GM12878 (cell line): ENCODE measurements at regions of chr2 and their contacts with region 1.

Region 1: DNA sequence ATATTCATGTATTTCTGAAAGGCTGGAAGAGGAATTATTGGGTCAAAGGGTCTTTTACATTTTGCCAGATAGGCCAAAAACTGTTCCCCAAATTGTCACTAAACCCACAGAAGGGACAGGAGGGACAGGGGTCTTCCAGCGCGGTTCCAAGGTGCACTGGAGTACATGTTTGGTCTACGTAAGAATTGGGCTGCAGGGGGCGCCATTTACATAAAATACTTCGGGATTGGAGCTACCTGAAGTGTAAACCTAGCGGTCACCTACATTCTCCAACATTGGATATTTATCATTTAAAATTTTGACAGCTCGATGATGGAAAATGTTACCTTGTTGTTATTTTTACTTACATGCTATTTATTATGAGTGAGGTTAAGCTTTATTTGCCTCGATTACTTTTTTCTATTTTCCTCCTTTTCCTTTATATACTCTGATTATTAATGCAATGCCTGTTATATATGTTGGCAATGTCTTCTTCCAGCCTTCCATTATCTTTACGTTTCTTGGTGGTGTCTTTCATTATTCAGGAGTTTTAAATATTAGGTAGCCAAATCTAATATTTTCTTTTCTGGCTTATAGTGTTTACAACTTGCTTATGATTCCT is 43.0 kb upstream of the RAB6C start:
- DNase-seq: no peak
- ATAC-seq: peak; percentile 72
- H3K4me3 ChIP-seq: no peak overlapping the region
- H3K27ac ChIP-seq: no peak overlapping the region
- H3K4me1 ChIP-seq: no peaks in the 10 kb centered on the region
- H3K27me3 ChIP-seq: no peaks in the 10 kb centered on the region; a peak in 1 of 4 replicates
- CTCF ChIP-seq: peak; percentile 36 to 48 (median 42); a peak in 5 of 6 replicates
- EP300 ChIP-seq: no peak
- POLR2A ChIP-seq: no peak
- RAD21 ChIP-seq: peak; percentile 57

Region 2: DNA sequence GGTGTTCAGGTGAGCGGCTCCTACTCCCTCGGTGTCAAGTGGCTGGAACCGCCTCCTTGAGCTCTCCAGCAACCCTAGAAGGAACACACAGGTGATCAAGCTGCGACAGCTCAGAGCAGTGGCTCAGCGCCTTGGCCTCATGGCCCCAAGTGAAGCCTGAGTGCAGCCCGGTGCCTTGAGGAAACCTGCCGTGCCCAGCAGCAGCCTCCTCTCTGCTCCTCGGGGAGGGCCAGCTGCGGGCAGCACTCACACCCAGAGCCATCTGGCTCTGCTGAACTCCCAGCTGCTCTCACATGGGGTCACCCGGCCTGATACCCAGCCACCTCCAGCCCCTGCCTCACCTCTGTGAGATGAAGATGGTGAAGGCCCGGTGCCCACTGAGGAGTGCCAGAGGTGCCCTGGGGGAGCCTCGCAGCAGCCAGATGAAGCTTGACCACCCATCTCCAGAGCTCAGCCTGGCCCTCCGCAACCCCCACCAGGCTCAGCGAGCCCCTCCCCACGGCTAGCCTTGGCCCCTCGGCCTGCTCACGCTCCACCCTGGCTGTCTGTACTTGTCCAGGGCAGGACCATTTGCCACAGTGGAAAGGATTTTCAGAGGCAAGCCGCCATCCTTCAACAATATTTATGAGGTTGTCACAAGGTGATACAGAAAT is 27.6 kb before region 1 on chr2:
- CTCF ChIA-PET with region 1: no interaction called
- POLR2A ChIA-PET with region 1: no interaction called
- RAD21 ChIA-PET with region 1: no interaction called
- SMC1A ChIA-PET with region 1: no interaction called
- in situ Hi-C with region 1: no loop called
- intact Hi-C with region 1: no loop called
- DNase-seq: no peak
- ATAC-seq: no peak
- H3K4me3 ChIP-seq: no peak overlapping the region
- H3K27ac ChIP-seq: no peak overlapping the region
- H3K4me1 ChIP-seq: no peaks in the 10 kb centered on the region
- H3K27me3 ChIP-seq: no peaks in the 10 kb centered on the region; a peak in 1 of 4 replicates
- CTCF ChIP-seq: no peak
- EP300 ChIP-seq: no peak
- POLR2A ChIP-seq: no peak
- RAD21 ChIP-seq: no peak

Region 3: GRCh38 chr2:130303169-130303568 is 366.7 kb after region 1 on chr2:
- CTCF ChIA-PET with region 1: no interaction called
- POLR2A ChIA-PET with region 1: no interaction called
- RAD21 ChIA-PET with region 1: no interaction called
- SMC1A ChIA-PET with region 1: no interaction called
- in situ Hi-C with region 1: no loop called
- intact Hi-C with region 1: no loop called
- DNase-seq: peak; percentile 38
- ATAC-seq: peak; percentile 52
- H3K4me3 ChIP-seq: peak overlapping the region; percentile 50
- H3K27ac ChIP-seq: no peak overlapping the region
- H3K4me1 ChIP-seq: peaks cover 23% of the 10 kb centered on the region
- H3K27me3 ChIP-seq: no peaks in the 10 kb centered on the region
- CTCF ChIP-seq: no peak
- EP300 ChIP-seq: no peak
- POLR2A ChIP-seq: no peak
- RAD21 ChIP-seq: no peak

Region 4: DNA sequence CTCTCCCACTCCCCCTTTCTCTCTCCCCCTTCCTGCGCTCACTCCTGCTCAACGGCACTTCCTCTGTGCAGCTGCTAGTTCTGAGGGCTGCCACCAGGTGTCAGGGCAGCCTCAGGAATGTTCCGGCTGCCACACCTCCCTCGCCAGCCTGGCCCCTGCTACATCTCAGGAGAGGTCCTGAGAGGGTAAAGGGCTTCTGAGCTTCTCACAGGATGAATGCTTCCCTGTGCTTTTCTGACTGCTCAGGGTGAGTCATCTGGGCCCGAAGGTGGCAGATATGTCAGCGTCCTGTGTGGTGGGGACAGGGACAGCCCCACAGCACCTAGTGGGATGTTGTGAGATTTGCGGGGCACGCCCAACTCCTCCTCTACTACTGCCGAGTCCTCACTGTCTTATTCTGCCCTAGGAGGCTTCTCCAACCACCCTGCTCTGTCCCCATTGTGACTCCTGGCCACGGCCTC is 1217.7 kb after region 1 on chr2:
- CTCF ChIA-PET with region 1: interaction called, 8 read pairs
- POLR2A ChIA-PET with region 1: interaction called, 3 read pairs
- RAD21 ChIA-PET with region 1: interaction called, 3 read pairs
- SMC1A ChIA-PET with region 1: no interaction called
- in situ Hi-C with region 1: loop called (anchors 10 kb)
- intact Hi-C with region 1: loop called (anchors 1 kb)
- DNase-seq: peak; percentile 24
- ATAC-seq: peak; percentile 95
- H3K4me3 ChIP-seq: no peak overlapping the region
- H3K27ac ChIP-seq: no peak overlapping the region
- H3K4me1 ChIP-seq: peaks cover 10% of the 10 kb centered on the region
- H3K27me3 ChIP-seq: no peaks in the 10 kb centered on the region
- CTCF ChIP-seq: peak; percentile 90 to 97 (median 90); a peak in 5 of 6 replicates
- EP300 ChIP-seq: no peak
- POLR2A ChIP-seq: no peak
- RAD21 ChIP-seq: peak; percentile 87